Heart left ventricle (tissue), 16 donors: ENCODE measurements at regions of chr14 and their contacts with region 1.

Region 1: DNA sequence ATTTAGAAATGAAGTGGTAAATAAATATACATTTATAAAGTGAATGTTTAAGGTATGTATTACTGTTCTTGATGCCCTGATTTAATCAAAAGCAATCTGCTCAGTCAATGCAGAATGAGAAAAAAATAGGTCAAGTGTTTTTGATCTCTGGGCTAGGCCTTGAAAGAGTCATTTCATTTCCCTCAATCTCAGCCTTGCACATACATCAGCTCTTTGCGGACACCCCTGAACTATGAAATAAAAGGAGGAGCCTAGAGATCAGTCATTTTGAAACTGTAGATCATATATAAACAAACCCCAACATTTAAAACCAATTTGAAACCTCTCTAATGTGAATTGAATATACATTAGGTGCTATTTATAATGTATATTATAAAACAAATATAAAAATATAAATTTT is 42.5 kb downstream of the ATG2B start:
- DNase-seq: no peak
- ATAC-seq: no peak
- H3K4me3 ChIP-seq: no peak overlapping the region
- H3K27ac ChIP-seq: no peak overlapping the region
- H3K4me1 ChIP-seq: no peaks in the 10 kb centered on the region
- H3K27me3 ChIP-seq: no peaks in the 10 kb centered on the region
- CTCF ChIP-seq: no peak
- POLR2A ChIP-seq: no peak

Region 2: GRCh38 chr14:96409701-96410100 is 89.1 kb after region 1 on chr14:
- intact Hi-C with region 1: no loop called
- DNase-seq: no peak
- ATAC-seq: no peak
- H3K4me3 ChIP-seq: no peak overlapping the region
- H3K27ac ChIP-seq: no peak overlapping the region
- H3K4me1 ChIP-seq: no peaks in the 10 kb centered on the region
- H3K27me3 ChIP-seq: no peaks in the 10 kb centered on the region
- CTCF ChIP-seq: no peak
- POLR2A ChIP-seq: no peak

Region 3: DNA sequence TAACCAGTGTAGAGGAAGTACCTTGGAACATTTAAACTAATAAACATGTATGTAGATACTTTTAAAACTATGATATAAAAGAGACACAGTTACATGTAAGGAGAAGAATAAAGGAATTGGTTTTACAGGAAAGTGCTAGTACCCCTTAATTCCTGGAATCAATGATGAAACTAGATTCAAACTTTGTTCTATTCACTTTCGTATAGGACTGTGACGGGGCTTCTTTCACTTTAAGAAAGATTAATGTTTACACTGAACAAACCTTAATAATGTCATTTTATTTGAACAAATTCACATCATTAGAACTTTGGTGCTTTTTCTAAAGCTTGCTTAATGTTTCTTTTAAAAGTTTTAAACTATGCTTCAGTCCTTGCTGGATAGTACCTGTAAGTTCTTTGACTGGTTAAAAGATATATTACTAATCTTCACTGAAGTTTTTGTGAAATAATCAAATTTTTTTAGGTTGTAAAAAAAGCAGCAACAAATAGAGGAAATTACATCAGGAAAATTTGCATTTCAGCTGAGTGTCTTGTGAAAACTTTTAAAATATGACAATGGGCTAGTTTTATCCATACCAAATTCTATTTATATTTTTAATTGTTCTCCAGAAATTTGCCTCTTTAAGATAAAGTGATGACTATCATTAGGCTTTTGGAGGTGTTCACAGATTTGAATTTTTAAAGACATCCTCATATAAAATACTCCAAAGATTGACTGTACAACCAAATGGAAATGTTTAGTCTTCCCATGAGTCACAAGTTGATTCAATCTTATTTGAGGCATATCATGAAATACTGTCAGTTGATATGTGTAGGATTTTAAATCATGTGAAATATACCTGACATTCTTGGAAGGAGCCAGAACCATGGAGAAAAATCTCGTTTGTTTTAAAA is 217.7 kb after region 1 on chr14:
- intact Hi-C with region 1: loop called in 1 of 10 experiments (anchors 10 kb)
- DNase-seq: no peak
- ATAC-seq: no peak
- H3K4me3 ChIP-seq: no peak overlapping the region
- H3K27ac ChIP-seq: no peak overlapping the region
- H3K4me1 ChIP-seq: no peaks in the 10 kb centered on the region
- H3K27me3 ChIP-seq: no peaks in the 10 kb centered on the region
- CTCF ChIP-seq: no peak
- POLR2A ChIP-seq: no peak

Region 4: DNA sequence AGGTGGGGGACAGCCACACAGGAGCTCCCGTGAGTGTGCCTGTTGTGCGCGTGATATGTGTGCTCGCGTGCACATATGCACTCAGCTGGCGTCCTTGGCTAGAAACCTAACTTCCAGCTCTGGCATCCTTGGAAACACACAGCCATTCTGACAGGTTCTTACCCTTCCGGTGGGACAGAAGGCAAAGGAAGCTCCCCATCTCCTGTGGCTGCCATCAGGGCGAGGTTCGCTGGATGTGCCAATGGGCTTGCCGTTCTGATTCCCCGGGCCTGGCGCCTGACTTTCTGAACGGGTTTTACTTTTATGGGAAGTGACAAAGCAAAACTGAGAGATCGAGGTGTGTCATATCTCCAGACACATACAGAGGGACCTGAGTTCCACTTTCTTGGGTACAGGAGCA is 306.3 kb after region 1 on chr14:
- intact Hi-C with region 1: no loop called
- DNase-seq: no peak
- ATAC-seq: no peak
- H3K4me3 ChIP-seq: no peak overlapping the region
- H3K27ac ChIP-seq: no peak overlapping the region
- H3K4me1 ChIP-seq: no peaks in the 10 kb centered on the region
- H3K27me3 ChIP-seq: peaks cover 0 to 37% (median 3%) of the 10 kb centered on the region in 9 donors
- CTCF ChIP-seq: no peak
- POLR2A ChIP-seq: no peak

Region 5: GRCh38 chr14:97120204-97120603 is 799.6 kb after region 1 on chr14:
- intact Hi-C with region 1: no loop called
- DNase-seq: no peak
- ATAC-seq: no peak
- H3K4me3 ChIP-seq: no peak overlapping the region
- H3K27ac ChIP-seq: peak overlapping the region in 1 of 12 donors; percentile 27
- H3K4me1 ChIP-seq: no peaks in the 10 kb centered on the region
- H3K27me3 ChIP-seq: peaks cover 0 to 14% (median 0%) of the 10 kb centered on the region in 9 donors
- CTCF ChIP-seq: no peak
- POLR2A ChIP-seq: no peak